ENCODE measurements at regions of chr1 and their contacts with region 1.

Region 1: DNA sequence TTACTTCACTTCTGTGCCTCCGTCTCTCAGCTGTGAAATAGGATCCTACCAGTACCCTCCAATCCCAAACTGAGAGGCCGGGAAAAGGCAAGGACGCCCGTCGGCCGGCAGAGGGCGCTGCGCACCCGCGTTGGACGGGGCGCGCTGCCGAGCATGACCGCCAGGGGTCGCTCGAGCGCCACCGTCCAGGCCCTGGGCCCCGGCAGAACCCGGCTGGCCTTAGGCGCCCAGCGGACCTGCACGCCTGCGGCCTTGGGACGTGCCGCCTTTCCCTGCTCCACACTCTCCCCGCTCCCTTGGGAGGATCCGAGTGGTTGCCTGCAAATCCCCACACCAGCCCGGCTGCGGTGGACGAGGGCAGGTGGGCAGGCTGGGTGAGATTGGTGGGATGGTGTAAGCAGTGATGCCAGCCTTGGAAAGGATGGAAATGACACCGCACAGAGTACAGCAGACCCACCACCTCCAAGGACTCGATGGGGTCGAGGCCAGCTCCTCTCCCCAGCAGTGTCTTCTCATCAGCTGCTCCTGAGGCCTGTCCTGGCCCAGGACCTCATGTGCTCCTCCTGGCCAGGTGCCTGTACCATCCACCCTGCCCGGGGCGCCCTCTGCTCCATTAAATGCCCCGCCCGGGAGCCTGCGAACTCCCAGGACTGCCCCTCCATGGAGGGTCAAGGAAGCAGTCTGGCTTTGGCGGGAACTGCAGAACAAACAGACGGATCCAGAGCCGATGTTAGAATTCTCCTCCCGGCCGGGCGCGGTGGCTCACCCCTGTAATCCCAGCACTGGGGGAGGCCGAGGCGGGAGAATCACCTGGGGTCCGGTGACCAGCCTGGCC is 47.4 kb upstream of the LBR start:
- DNase-seq: peak; percentile 71
- ATAC-seq: peak; percentile 89
- H3K4me3 Mint-ChIP-seq: no peak overlapping the region
- H3K27ac Mint-ChIP-seq: no peak overlapping the region
- H3K4me1 Mint-ChIP-seq: peaks cover 14% of the 10 kb centered on the region; the same call in 1 of the 2 replicates
- H3K27me3 Mint-ChIP-seq: peaks cover 6% of the 10 kb centered on the region
- CTCF ChIP-seq: peak; percentile 100

Region 2: DNA sequence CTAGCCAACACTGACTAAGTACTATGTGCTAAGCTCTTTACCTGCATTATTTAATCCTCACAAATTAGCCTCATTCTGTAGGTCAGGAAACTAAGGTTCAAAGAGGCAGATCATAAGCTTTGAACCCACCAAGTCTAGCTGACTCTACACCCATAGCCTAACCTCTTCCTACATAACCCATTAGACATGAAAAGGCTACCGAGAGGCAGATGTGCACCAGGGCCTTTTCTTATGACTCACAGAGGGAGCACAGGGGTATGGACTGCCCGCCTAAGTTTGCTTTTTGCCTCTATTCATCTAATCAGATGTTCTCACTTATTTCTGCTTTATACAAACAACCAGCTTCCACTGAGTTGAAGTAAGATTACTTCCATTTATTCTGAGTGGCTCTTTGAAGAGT is 78.8 kb before region 1 on chr1:
- CTCF ChIA-PET with region 1: no interaction called
- POLR2A ChIA-PET with region 1: no interaction called
- DNase-seq: no peak
- ATAC-seq: no peak
- H3K4me3 Mint-ChIP-seq: no peak overlapping the region
- H3K27ac Mint-ChIP-seq: no peak overlapping the region
- H3K4me1 Mint-ChIP-seq: no peaks in the 10 kb centered on the region
- H3K27me3 Mint-ChIP-seq: no peaks in the 10 kb centered on the region
- CTCF ChIP-seq: no peak

Region 3: DNA sequence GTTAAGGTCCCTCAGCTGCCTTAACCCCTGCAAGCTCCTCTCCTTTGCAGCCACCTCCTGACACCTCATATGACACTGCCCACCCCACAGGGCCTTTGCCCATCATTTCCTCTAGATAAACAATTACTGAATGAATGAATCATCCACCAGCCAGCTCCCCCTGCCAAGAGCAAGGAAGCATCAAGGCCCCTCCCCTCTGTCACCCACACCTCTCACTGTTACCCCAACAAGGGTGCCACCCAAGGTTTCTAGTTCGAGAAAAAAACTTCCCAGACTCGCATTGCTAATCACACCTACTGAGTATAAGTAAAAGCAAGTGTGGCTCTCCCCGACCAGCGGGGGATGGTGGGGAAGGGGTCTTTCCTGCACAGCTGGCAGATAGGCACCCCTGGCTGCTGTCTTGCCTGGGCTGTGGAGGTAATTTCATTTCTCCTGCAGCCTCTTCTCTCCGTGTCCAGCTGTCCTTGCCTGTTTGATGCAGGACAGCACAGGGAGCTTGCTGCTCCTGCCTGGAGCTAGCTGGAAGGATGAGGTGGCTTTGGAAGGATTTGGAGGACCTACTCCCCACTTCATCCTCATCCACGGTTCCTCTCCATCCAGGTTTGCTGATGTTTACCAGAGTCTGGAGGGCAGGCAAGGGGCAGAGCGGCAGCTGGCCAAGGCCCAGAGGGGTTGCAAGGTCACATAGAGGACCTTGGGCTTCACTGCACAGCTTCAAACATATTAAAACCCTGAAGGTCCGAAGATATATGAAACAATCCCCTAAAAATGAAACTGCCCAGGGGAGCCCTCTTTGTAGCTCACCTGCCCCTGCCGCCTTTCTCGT is 14.3 kb before region 1 on chr1:
- CTCF ChIA-PET with region 1: interaction called, 25 read pairs
- POLR2A ChIA-PET with region 1: no interaction called
- DNase-seq: no peak
- ATAC-seq: no peak
- H3K4me3 Mint-ChIP-seq: no peak overlapping the region
- H3K27ac Mint-ChIP-seq: no peak overlapping the region
- H3K4me1 Mint-ChIP-seq: peaks cover 45% of the 10 kb centered on the region
- H3K27me3 Mint-ChIP-seq: no peaks in the 10 kb centered on the region
- CTCF ChIP-seq: no peak

Region 4: GRCh38 chr1:225746361-225747179 is 271.4 kb after region 1 on chr1:
- CTCF ChIA-PET with region 1: interaction called, 13 read pairs
- POLR2A ChIA-PET with region 1: no interaction called
- DNase-seq: peak; percentile 75
- ATAC-seq: peak; percentile 91
- H3K4me3 Mint-ChIP-seq: peak overlapping the region; percentile 20
- H3K27ac Mint-ChIP-seq: peak overlapping the region; percentile 65
- H3K4me1 Mint-ChIP-seq: peaks cover 29% of the 10 kb centered on the region
- H3K27me3 Mint-ChIP-seq: peaks cover 18% of the 10 kb centered on the region
- CTCF ChIP-seq: no peak

Region 5: DNA sequence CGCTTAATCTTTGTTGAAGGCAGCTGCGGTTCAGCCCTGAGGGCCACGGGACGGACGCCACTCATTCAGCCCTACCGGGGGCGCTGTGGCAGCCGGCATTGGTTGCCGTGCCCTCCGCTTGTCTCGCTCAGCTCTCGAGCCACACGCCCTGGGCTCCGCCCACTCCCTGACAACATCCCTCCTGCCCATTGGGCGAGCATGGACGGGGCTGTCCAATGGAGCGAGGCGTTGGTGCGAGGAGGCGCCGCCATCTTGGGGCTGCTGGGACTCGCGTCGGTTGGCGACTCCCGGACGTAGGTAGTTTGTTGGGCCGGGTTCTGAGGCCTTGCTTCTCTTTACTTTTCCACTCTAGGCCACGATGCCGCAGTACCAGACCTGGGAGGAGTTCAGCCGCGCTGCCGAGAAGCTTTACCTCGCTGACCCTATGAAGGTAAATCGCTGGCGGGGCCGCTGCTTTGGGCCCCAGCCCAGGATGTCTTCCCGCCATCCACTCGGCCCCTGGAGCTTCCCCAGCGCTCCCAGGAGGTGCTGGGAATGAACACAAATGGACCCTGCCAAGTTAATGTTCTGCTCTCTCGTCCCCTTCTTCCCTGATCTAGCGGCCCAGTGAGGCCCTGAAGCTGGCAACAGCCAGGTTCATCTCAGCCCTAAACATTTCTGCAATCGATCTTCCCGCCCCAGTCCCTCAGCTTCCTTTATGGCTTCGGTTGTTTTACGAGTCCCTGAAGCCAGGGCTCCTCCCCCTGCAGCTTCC is 302.6 kb after region 1 on chr1 and contains the start of gene SRP9:
- CTCF ChIA-PET with region 1: interaction called, 99 read pairs
- POLR2A ChIA-PET with region 1: interaction called, 8 read pairs
- DNase-seq: peak; percentile 100
- ATAC-seq: peak; percentile 97
- H3K4me3 Mint-ChIP-seq: no peak within 1 kb of the TSS
- H3K27ac Mint-ChIP-seq: no peak within 1 kb of the TSS
- H3K4me1 Mint-ChIP-seq: peaks cover 40% of the 10 kb centered on the region
- H3K27me3 Mint-ChIP-seq: no peaks in the 10 kb centered on the region
- CTCF ChIP-seq: peak; percentile 65
- total RNA-seq, gene SRP9: 374 to 395 TPM (median 375 TPM) in 3 replicates

Region 6: GRCh38 chr1:225825607-225826007 is 350.4 kb after region 1 on chr1:
- CTCF ChIA-PET with region 1: interaction called, 17 read pairs
- POLR2A ChIA-PET with region 1: no interaction called
- DNase-seq: no peak
- ATAC-seq: no peak
- H3K4me3 Mint-ChIP-seq: no peak overlapping the region
- H3K27ac Mint-ChIP-seq: peak overlapping the region; percentile 39; the same call in 1 of the 2 replicates
- H3K4me1 Mint-ChIP-seq: peaks cover 36% of the 10 kb centered on the region
- H3K27me3 Mint-ChIP-seq: no peaks in the 10 kb centered on the region; the same call in 1 of the 2 replicates
- CTCF ChIP-seq: no peak

Region 7: DNA sequence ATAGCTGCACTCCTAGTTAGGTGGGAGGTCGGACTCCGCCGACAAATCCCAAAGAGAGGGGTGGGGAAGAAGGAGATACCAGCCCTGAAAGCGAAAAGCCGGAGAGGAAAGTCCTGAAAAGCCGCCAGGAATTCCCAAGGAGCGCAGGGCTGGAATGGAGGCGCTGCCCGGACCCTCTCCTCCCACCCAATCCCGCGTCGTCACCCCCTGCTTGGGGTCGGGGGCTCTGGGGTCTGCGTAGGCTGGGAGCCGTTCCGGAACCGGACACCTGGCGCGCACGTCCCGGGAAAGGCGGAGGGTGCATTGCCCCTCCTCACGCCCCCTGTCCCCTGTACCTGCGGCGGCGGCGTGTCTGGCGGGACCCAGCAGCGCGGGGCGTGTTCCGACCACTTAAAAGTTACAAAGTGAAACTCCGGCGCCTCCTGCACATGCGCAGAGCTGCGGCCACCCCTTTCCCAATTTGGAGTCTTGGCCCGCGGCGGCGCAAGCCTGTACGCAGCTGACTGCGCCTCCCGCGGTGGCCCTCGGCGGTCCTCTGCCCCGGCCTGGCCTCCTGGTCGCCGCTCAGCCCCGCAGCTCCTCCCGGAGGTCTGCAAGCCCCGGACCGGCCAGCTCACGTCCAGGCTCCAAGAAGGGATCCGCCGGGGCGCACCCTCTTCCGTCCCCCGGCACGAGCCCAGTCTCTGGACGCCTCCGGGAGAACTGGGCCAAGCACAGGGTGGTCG is 406.9 kb after region 1 on chr1 and contains the start of gene TMEM63A:
- CTCF ChIA-PET with region 1: interaction called, 10 read pairs
- POLR2A ChIA-PET with region 1: no interaction called
- DNase-seq: peak; percentile 94
- ATAC-seq: peak; percentile 30
- H3K4me3 Mint-ChIP-seq: peak within 1 kb of the TSS; percentile 77
- H3K27ac Mint-ChIP-seq: peak within 1 kb of the TSS; percentile 85
- H3K4me1 Mint-ChIP-seq: peaks cover 54% of the 10 kb centered on the region
- H3K27me3 Mint-ChIP-seq: no peaks in the 10 kb centered on the region; the same call in 1 of the 2 replicates
- CTCF ChIP-seq: no peak
- total RNA-seq, gene TMEM63A: 61.1 to 91.7 TPM (median 69.3 TPM) in 3 replicates

Measured in WTC11 (cell line).